ENCODE measurements at regions of chr18 and their contacts with region 1.

Region 1: GRCh38 chr18:48663931-48664847 is 125.4 kb downstream of the CTIF start:
- DNase-seq: peak in 1 of 2 experiments; percentile 54
- H3K4me3 ChIP-seq: no peak overlapping the region
- H3K27ac ChIP-seq: no peak overlapping the region
- H3K4me1 ChIP-seq: peaks cover 34% of the 10 kb centered on the region
- H3K27me3 ChIP-seq: no peaks in the 10 kb centered on the region
- CTCF ChIP-seq: peak; percentile 92

Region 2: GRCh38 chr18:48230467-48231113 is 433.6 kb before region 1 on chr18:
- CTCF ChIA-PET with region 1: no interaction called
- POLR2A ChIA-PET with region 1: no interaction called
- intact Hi-C with region 1: loop called (anchors 5 kb)
- DNase-seq: peak; percentile 55 to 59
- H3K4me3 ChIP-seq: no peak overlapping the region
- H3K27ac ChIP-seq: no peak overlapping the region
- H3K4me1 ChIP-seq: peaks cover 50% of the 10 kb centered on the region
- H3K27me3 ChIP-seq: no peaks in the 10 kb centered on the region
- CTCF ChIP-seq: peak; percentile 77

Region 3: DNA sequence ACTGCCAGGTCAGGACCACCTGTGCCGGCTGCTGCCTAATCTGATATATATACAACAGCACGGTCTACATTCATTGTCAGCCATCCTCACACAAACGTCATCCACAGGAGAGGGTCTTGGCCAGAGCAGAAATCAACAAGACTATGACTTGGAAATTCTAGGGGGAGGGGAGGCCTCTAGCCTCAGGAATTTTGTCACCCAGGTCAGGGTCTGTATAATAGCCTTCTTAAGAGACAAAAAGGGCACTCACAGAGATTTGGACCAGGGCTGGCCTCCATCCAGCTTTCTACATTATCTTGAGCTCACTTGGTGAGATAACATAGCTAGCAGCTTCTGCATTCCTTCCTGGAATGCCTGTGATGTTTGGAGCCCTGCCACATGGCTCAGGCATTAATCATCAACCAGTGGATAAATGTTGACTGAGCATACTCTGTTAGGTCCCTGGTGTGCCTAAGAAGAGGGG is 175.8 kb before region 1 on chr18:
- CTCF ChIA-PET with region 1: no interaction called
- POLR2A ChIA-PET with region 1: no interaction called
- intact Hi-C with region 1: loop called (anchors 1 kb)
- DNase-seq: peak; percentile 79 to 95
- H3K4me3 ChIP-seq: no peak overlapping the region
- H3K27ac ChIP-seq: no peak overlapping the region
- H3K4me1 ChIP-seq: peaks cover 46% of the 10 kb centered on the region
- H3K27me3 ChIP-seq: no peaks in the 10 kb centered on the region
- CTCF ChIP-seq: no peak

Region 4: GRCh38 chr18:48605408-48605845 is 58.8 kb before region 1 on chr18:
- CTCF ChIA-PET with region 1: no interaction called
- POLR2A ChIA-PET with region 1: no interaction called
- intact Hi-C with region 1: loop called (anchors 1 kb)
- DNase-seq: peak in 1 of 2 experiments; percentile 5
- H3K4me3 ChIP-seq: no peak overlapping the region
- H3K27ac ChIP-seq: no peak overlapping the region
- H3K4me1 ChIP-seq: no peaks in the 10 kb centered on the region
- H3K27me3 ChIP-seq: no peaks in the 10 kb centered on the region
- CTCF ChIP-seq: peak; percentile 43; the same call in 1 of the 2 replicates

Measured in PC-9 (cell line).